Panc1 (cell line): ENCODE measurements at regions of chr7 and their contacts with region 1.

Region 1: DNA sequence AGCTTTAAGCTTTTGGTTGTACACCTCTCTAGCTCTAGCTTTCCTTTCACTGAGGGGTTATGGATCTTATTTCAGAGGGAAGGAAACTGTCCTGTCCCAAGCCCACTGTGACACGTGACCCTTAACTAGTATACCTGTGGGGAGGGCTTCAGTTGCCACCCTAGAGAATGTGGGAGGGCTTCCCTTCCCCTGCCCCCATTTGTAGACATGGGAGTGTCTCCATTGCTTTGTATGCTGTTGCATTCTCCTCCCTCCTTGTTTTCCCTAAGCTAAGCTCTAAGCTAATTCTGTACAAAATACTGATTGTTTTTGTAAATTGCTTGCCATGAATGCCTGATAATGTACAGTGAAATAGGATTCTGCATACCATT is 11.2 kb downstream of the LUC7L2 start:
- DNase-seq: no peak
- ATAC-seq: 0 out of 2 replicates have a peak, but pooled peaks have one; percentile 32
- H3K4me3 ChIP-seq: no peak overlapping the region
- H3K27ac ChIP-seq: no peak overlapping the region
- H3K4me1 ChIP-seq: peaks cover 24% of the 10 kb centered on the region
- H3K27me3 ChIP-seq: no peaks in the 10 kb centered on the region
- CTCF ChIP-seq: no peak

Region 2: DNA sequence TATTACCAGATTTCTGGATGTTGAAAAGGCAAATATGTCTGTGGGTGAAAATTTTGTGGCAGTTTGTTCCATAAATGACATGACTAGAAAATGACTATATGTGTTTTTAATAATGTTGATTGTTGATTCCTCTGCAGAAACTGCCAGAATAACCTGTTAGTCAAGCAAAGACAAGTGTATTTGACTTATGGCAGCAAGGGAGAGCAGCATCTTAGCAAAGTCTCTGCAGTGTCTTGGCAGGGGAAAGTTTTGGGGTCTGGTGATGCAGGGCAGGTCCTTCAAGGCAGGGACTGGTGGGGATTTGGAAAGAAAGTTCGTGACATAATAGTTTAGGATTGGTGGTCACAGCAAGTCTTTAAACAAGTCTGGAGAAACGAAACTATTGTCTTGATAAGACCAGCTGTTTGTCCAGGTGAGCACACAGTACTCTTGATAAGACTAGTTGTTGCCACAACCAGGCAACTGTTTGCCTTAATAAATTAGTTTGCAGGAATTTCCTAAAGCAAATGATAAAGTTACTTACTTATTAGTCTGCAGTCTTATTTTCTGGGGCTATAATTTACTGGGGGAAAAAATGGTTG is 1158.7 kb before region 1 on chr7:
- CTCF ChIA-PET with region 1: no interaction called
- POLR2A ChIA-PET with region 1: interaction called, 12 read pairs
- in situ Hi-C with region 1: no loop called
- intact Hi-C with region 1: no loop called
- DNase-seq: no peak
- ATAC-seq: no peak
- H3K4me3 ChIP-seq: no peak overlapping the region
- H3K27ac ChIP-seq: no peak overlapping the region
- H3K4me1 ChIP-seq: no peaks in the 10 kb centered on the region
- H3K27me3 ChIP-seq: no peaks in the 10 kb centered on the region
- CTCF ChIP-seq: no peak

Region 3: DNA sequence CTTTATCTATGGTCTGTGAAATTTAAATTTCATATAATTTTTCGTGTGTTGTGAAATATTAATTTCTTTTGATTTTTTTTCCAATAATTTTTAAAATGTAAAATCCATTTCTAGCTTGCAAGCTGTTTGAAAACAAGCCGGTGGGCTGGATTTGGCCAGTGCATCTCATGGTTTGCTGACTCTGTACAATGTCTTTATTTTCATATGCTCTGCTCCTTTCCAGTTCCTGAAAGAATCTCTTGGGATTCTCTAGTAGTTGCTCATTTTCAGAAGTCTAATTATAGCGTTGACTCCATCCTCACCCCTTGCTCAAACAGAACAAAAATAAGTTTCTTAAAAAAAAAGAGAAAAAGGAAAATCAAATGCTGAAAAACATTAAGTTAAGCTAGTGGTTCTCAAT is 118.5 kb before region 1 on chr7:
- CTCF ChIA-PET with region 1: no interaction called
- POLR2A ChIA-PET with region 1: no interaction called
- in situ Hi-C with region 1: no loop called
- intact Hi-C with region 1: no loop called
- DNase-seq: no peak
- ATAC-seq: no peak
- H3K4me3 ChIP-seq: no peak overlapping the region
- H3K27ac ChIP-seq: no peak overlapping the region
- H3K4me1 ChIP-seq: no peaks in the 10 kb centered on the region
- H3K27me3 ChIP-seq: no peaks in the 10 kb centered on the region
- CTCF ChIP-seq: no peak

Region 4: GRCh38 chr7:139382439-139382838 is 11.5 kb after region 1 on chr7:
- CTCF ChIA-PET with region 1: no interaction called
- POLR2A ChIA-PET with region 1: no interaction called
- in situ Hi-C with region 1: no loop called
- intact Hi-C with region 1: no loop called
- DNase-seq: no peak
- ATAC-seq: no peak
- H3K4me3 ChIP-seq: no peak overlapping the region
- H3K27ac ChIP-seq: no peak overlapping the region
- H3K4me1 ChIP-seq: no peaks in the 10 kb centered on the region
- H3K27me3 ChIP-seq: no peaks in the 10 kb centered on the region
- CTCF ChIP-seq: no peak

Region 5: DNA sequence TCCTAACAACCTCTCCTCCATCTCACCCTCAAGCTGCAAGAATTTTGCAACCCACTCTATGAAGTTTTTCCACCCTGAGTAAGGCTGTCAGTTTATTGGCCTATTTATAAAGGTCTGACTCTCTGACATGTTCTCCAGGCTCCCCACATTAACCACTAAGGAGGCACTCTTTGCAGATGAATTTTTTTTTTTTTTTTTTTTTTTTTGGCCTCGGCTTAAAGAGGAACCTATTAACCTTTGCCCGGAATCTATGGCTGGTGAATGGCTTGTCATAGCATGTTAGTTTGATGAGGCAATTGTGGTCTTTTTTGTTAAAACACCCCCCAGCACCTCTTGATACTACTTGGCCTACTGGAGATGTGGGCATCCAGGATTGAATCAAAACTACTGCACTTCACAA is 515.3 kb after region 1 on chr7:
- CTCF ChIA-PET with region 1: no interaction called
- POLR2A ChIA-PET with region 1: no interaction called
- in situ Hi-C with region 1: no loop called
- intact Hi-C with region 1: no loop called
- DNase-seq: no peak
- ATAC-seq: no peak
- H3K4me3 ChIP-seq: no peak overlapping the region
- H3K27ac ChIP-seq: no peak overlapping the region
- H3K4me1 ChIP-seq: no peaks in the 10 kb centered on the region
- H3K27me3 ChIP-seq: no peaks in the 10 kb centered on the region
- CTCF ChIP-seq: no peak